Activated naive CD4-positive, alpha-beta T cell treated with anti-CD3 and anti-CD28 coated beads for 36 hours (primary cell): ENCODE measurements at regions of chr7 and their contacts with region 1.

Region 1: GRCh38 chr7:83976295-83976694 is 218.3 kb downstream of the SEMA3A start:
- DNase-seq: no peak
- H3K4me3 Mint-ChIP-seq: no peak overlapping the region
- H3K27ac Mint-ChIP-seq: no peak overlapping the region
- H3K4me1 Mint-ChIP-seq: no peaks in the 10 kb centered on the region
- H3K27me3 Mint-ChIP-seq: no peaks in the 10 kb centered on the region

Region 2: GRCh38 chr7:83936056-83936708 is 40.1 kb before region 1 on chr7:
- CTCF ChIA-PET with region 1: interaction called, 4 read pairs
- intact Hi-C with region 1: loop called (anchors 1 kb)
- DNase-seq: peak; percentile 74
- H3K4me3 Mint-ChIP-seq: no peak overlapping the region
- H3K27ac Mint-ChIP-seq: no peak overlapping the region
- H3K4me1 Mint-ChIP-seq: peaks cover 2% of the 10 kb centered on the region
- H3K27me3 Mint-ChIP-seq: peaks cover 2% of the 10 kb centered on the region

Region 3: DNA sequence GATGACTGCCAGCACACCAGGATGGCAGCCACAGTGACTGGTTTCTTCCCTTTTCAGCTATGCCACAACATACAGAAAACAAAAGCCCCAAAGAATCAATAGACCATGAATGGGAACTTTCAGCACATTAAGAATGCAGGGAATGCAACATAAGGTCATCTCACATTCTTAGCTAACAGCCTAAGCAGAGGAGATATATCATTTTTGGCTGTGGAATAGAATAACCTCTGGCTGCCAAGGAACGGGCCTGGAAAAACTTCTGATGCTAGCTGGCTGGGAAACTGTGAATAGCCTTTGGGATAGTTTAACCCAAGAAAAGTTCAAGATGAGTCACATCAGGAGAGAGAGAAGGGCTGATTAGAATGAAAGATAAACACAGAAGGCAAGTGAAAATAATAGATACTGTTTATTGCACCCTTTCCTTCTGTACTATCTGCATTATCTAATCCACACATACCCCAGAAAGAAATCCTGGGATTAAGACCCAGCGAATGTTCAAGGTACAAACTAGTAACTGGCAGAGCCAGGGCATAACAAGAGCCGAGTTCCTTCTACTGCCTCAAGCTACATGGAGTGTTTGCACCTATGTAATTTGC is 49.1 kb after region 1 on chr7:
- CTCF ChIA-PET with region 1: no interaction called
- intact Hi-C with region 1: no loop called
- DNase-seq: no peak
- H3K4me3 Mint-ChIP-seq: no peak overlapping the region
- H3K27ac Mint-ChIP-seq: no peak overlapping the region
- H3K4me1 Mint-ChIP-seq: no peaks in the 10 kb centered on the region
- H3K27me3 Mint-ChIP-seq: no peaks in the 10 kb centered on the region

Region 4: DNA sequence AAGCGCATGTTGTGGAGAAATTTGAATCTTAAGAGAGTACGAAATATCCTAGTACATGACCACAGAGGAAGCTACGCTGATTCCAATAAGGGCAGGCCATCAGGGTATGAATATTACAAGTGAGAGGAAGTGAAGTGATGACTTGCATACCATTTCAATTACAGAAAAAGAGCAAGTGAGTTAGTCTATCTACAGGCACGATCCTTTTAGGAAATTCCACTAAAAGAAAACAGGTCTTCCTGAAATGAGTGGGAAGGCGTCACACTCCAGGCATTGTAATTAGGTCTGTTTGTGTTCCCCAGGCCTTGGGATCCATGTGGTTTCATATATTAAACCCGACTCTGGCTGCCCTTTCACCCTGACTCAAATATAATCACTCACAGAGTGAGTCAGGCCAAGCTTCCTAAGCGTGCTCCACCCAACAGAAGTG is 65.8 kb after region 1 on chr7:
- CTCF ChIA-PET with region 1: no interaction called
- intact Hi-C with region 1: no loop called
- DNase-seq: no peak
- H3K4me3 Mint-ChIP-seq: no peak overlapping the region
- H3K27ac Mint-ChIP-seq: no peak overlapping the region
- H3K4me1 Mint-ChIP-seq: peaks cover 1% of the 10 kb centered on the region
- H3K27me3 Mint-ChIP-seq: no peaks in the 10 kb centered on the region

Region 5: DNA sequence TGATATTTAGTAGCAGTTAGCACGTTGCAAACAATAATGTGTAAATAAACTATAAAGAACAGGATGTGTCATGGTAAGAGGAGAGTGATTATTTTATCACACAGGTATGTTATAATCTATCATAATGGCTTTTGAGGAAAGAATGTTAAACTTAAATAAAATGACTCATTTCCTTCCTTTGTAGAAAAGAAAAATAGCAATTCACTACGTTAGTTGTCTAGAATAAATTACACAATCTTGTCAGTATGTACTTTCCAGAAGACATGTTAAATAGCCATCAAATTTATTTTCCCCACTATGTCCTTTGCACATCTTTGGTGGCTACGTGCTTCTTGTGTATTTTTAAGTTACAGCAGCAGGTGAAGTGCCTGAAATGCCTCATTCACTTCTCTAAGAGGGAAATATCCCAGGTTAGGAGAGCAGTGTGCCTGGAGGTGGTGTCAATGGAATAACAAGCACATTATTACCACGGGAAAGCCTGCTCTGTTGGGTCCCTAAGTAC is 84.5 kb after region 1 on chr7:
- CTCF ChIA-PET with region 1: no interaction called
- intact Hi-C with region 1: no loop called
- DNase-seq: no peak
- H3K4me3 Mint-ChIP-seq: no peak overlapping the region
- H3K27ac Mint-ChIP-seq: no peak overlapping the region
- H3K4me1 Mint-ChIP-seq: peaks cover 7% of the 10 kb centered on the region
- H3K27me3 Mint-ChIP-seq: no peaks in the 10 kb centered on the region

Region 6: GRCh38 chr7:84188786-84189405 is 212.6 kb after region 1 on chr7:
- CTCF ChIA-PET with region 1: interaction called, 4 read pairs
- intact Hi-C with region 1: loop called (anchors 1 kb)
- DNase-seq: no peak
- H3K4me3 Mint-ChIP-seq: no peak overlapping the region
- H3K27ac Mint-ChIP-seq: no peak overlapping the region
- H3K4me1 Mint-ChIP-seq: peaks cover 36% of the 10 kb centered on the region
- H3K27me3 Mint-ChIP-seq: no peaks in the 10 kb centered on the region

Region 7: GRCh38 chr7:84194543-84195271 is 218.4 kb after region 1 on chr7 and contains the start of gene SEMA3A:
- CTCF ChIA-PET with region 1: interaction called, 4 read pairs
- intact Hi-C with region 1: loop called (anchors 1 kb)
- DNase-seq: peak; percentile 56
- H3K4me3 Mint-ChIP-seq: peak within 1 kb of the TSS; percentile 90
- H3K27ac Mint-ChIP-seq: peak within 1 kb of the TSS; percentile 79
- H3K4me1 Mint-ChIP-seq: peaks cover 34% of the 10 kb centered on the region
- H3K27me3 Mint-ChIP-seq: peaks cover 2% of the 10 kb centered on the region
- total RNA-seq, gene SEMA3A: 2.7 to 3.0 TPM

Region 8: DNA sequence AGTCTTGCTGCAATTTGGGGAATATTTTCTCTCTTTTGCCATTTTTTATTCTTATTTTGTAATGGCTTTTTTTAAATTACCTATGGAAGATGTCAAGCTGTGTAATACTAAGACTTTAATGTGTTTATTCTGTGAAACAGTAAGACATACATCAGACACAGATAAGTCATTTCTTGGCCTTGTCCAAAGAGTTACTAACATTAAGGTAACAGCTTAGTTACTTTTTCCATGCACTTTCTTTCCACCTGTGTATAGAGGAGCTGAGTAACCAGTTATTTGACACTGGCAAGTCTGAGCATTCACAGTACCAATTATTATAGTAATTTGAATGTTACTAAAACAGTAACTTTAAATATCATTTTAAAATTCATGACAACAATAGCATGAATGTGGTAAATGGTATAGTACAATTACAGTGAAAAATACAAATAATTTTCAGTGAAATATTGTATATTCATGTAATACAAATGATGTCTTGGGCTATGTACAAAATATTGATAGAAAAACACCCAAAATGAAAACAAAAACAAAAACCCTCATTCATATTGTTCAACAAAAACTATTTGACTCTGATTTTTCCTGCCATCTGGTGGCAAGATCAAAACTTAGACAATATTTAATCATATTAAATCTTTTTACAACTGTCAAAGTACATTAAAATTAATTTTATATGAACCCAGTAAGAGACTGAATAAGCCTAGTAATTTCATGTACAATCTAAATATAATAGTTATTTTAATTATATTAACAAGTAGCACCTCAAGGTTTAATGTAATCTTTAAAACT is 478.1 kb after region 1 on chr7:
- CTCF ChIA-PET with region 1: no interaction called
- intact Hi-C with region 1: loop called (anchors 1 kb)
- DNase-seq: no peak
- H3K4me3 Mint-ChIP-seq: no peak overlapping the region
- H3K27ac Mint-ChIP-seq: no peak overlapping the region
- H3K4me1 Mint-ChIP-seq: no peaks in the 10 kb centered on the region
- H3K27me3 Mint-ChIP-seq: peaks cover 3% of the 10 kb centered on the region